Posterior cingulate gyrus (tissue), 11 donors: ENCODE measurements at regions of chr12 and their contacts with region 1.

Region 1: DNA sequence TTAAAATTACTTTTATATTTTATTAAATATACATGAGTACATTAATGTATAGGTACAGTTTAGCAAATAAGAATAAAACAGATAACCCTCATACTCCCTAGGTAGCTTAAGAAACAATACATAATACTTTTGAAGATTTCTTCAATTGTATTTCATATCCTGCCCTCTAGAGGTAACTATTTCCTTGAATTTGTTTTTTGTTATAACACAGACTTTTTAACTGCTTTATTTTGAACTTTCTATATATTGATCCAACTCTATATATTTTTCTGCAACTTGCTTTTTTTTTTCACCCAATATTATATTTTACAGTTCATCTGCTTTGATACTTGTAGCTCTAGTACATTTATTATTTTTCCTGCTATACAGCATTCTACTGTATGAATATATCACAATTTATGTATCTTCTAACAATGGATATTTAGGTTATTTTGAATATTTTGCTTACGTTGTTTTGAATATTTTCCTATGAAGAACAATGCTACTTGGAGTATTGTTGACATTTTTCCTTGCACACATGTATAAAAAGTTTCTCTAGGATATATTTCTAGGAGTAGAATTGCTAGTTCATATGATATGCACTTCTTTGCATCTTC is 72.8 kb upstream of the ABCD2 start:
- DNase-seq: no peak

Region 2: GRCh38 chr12:39319187-39319586 is 373.2 kb before region 1 on chr12:
- intact Hi-C with region 1: loop called (anchors 10 kb)
- DNase-seq: no peak